ENCODE measurements at regions of chr20 and their contacts with region 1.

Region 1: DNA sequence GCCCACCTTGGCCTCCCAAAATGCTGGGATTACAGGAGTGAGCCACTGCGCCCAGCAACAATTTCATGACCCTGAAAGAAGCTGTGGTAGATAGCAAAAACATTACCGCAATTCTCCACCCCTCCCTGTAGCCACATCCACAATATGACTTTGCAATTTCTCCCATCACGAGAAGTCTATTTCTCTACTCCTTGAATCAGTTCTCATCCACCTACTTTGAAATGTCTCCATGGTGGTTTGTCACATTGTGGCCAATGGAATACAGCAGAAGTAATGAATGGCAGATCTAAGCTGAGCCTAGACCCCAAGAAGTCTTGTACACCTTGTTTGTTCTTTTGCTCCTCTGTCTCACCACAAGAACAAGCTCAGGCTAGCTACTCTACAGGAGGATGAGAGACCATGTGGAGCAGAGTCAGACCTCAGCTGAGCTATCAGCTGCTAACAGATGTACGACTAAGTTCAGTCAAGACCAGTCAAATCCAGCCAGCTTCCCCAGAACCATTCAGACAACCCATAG is 6.3 kb downstream of the OXT start:
- DNase-seq: no peak
- ATAC-seq: no peak
- H3K4me3 ChIP-seq: no peak overlapping the region
- H3K27ac ChIP-seq: no peak overlapping the region
- H3K4me1 ChIP-seq: peaks cover 66% of the 10 kb centered on the region
- H3K27me3 ChIP-seq: peaks cover 11 to 28% of the 10 kb centered on the region in 2 experiments; a peak in 4 of 5 replicates
- CTCF ChIP-seq: no peak
- EP300 ChIP-seq: no peak
- POLR2A ChIP-seq: no peak
- RAD21 ChIP-seq: no peak

Region 2: GRCh38 chr20:3051385-3052019 is 26.2 kb before region 1 on chr20:
- CTCF ChIA-PET with region 1: interaction called, 61 read pairs
- POLR2A ChIA-PET with region 1: interaction called, 5 read pairs
- in situ Hi-C with region 1: no loop called
- intact Hi-C with region 1: loop called (anchors 1 kb)
- DNase-seq: no peak
- ATAC-seq: peak; percentile 62
- H3K4me3 ChIP-seq: no peak overlapping the region
- H3K27ac ChIP-seq: peak overlapping the region; percentile 2
- H3K4me1 ChIP-seq: peaks cover 42% of the 10 kb centered on the region
- H3K27me3 ChIP-seq: no peaks in the 10 kb centered on the region; a peak in 1 of 5 replicates
- CTCF ChIP-seq: no peak
- EP300 ChIP-seq: no peak
- POLR2A ChIP-seq: no peak
- RAD21 ChIP-seq: no peak; the same call in 1 of the 2 replicates